WTC11 (cell line): ENCODE measurements at regions of chr7 and their contacts with region 1.

Region 1: DNA sequence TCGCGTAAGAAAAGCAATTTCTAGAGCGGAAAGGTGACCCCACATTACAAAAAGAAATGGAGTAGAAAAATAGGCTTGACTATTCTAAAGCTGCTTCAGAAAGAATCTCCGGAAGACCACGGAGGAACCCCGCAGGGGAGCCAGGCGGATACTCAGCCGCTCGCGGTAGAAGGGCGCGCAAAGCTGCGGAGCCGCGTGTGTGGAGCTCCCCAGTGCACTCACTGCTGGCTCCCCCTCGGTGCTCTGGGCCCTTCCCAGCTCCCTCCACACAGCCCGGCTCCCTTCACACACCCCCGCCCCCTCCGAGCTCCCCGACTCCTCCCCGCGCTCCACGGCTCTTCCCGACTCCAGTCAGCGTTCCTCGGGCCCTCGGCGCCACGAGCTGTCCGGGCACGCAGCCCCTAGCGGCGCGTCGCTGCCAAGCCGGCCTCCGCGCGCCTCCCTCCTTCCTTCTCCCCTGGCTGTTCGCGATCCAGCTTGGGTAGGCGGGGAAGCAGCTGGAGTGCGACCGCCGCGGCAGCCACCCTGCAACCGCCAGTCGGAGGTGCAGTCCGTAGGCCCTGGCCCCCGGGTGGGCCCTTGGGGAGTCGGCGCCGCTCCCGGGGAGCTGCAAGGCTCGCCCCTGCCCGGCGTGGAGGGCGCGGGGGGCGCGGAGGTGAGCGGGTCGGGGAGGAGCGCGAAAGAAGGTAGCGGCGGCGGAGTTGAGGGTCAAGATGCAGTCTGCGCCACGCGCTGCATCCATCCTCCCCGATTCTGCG is at the start of gene STEAP2:
- DNase-seq: peak; percentile 91
- ATAC-seq: peak; percentile 93
- H3K4me3 Mint-ChIP-seq: no peak within 1 kb of the TSS
- H3K27ac Mint-ChIP-seq: peak within 1 kb of the TSS; percentile 57
- H3K4me1 Mint-ChIP-seq: peaks cover 21% of the 10 kb centered on the region
- H3K27me3 Mint-ChIP-seq: no peaks in the 10 kb centered on the region
- CTCF ChIP-seq: peak; percentile 14; the same call in 1 of the 2 replicates
- total RNA-seq, gene STEAP2: 13.4 to 17.3 TPM (median 17.0 TPM) in 3 replicates

Region 2: DNA sequence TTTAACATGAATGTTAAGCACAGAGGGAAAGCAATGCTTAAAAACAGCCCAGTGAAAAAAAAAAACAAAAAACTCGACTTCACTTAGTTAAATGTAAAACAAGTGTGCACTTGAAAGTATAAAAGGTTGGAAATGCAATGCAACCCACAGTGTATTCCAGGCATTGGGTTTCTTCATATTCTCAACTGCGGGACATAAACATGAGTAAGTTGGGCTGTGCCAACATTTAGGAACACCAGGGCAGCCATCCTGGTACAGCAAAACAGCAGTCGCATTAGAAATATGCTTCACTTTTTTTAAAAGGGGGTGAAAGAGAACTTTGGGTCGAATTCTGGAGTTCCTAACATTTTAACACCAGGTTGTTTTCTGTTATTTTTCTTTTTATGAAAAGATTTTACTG is 56.4 kb before region 1 on chr7:
- CTCF ChIA-PET with region 1: interaction called, 15 read pairs
- POLR2A ChIA-PET with region 1: interaction called, 3 read pairs
- DNase-seq: no peak
- ATAC-seq: no peak
- H3K4me3 Mint-ChIP-seq: peak overlapping the region; percentile 72
- H3K27ac Mint-ChIP-seq: no peak overlapping the region
- H3K4me1 Mint-ChIP-seq: peaks cover 20% of the 10 kb centered on the region
- H3K27me3 Mint-ChIP-seq: peaks cover 22% of the 10 kb centered on the region
- CTCF ChIP-seq: no peak

Region 3: GRCh38 chr7:90222811-90223725 is 11.5 kb after region 1 on chr7:
- CTCF ChIA-PET with region 1: interaction called, 29 read pairs
- POLR2A ChIA-PET with region 1: interaction called, 13 read pairs
- DNase-seq: no peak
- ATAC-seq: peak; percentile 6; the same call in 1 of the 2 replicates
- H3K4me3 Mint-ChIP-seq: no peak overlapping the region
- H3K27ac Mint-ChIP-seq: peak overlapping the region; percentile 70; the same call in 1 of the 2 replicates
- H3K4me1 Mint-ChIP-seq: peaks cover 37% of the 10 kb centered on the region
- H3K27me3 Mint-ChIP-seq: no peaks in the 10 kb centered on the region
- CTCF ChIP-seq: no peak

Region 4: DNA sequence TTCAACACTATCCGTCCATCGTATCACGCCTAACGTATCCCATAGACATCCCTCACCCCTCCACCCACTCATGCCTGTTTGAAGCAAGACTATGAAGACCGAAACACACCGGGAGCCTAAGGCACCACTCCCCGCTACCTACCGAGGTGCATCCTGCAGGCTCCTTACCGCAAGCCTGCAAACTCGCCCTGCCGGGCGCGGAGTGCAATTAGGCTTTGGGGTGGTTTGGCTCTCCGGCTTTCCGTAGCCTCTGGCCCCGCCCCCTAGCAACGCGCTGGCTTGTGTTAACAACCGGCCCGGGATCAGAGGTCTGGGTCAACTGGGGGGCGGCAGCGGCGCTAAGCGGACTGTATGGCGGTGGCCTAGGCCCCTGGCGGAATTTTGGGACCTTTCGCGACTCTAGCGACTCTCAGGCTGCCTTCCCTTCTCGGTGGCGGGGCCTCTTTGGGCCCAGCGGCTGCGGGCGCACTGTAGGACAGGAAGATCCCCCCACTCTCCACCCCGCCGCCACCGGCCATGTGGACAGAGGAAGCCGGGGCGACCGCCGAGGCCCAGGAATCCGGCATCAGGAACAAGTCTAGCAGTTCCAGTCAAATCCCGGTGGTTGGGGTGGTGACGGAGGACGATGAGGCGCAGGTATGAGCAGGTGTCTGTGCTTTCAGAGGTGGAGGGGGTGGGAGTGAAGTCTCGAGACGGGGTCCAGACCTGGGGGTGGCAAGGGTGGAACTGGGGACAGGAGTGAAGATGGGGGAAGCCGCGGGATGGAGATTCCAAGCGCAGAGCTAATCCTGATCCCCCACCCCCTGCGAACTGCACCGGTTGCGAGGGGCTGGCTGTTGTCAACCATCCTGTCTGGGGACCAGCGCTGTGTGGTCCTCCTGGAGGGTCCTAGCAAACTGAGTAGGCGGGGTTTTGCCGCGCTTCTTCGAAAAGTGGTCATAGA is 33.6 kb after region 1 on chr7 and contains the start of gene CFAP69:
- CTCF ChIA-PET with region 1: interaction called, 11 read pairs
- POLR2A ChIA-PET with region 1: interaction called, 5 read pairs
- DNase-seq: peak; percentile 98
- ATAC-seq: peak; percentile 83
- H3K4me3 Mint-ChIP-seq: peak within 1 kb of the TSS; percentile 95
- H3K27ac Mint-ChIP-seq: no peak within 1 kb of the TSS
- H3K4me1 Mint-ChIP-seq: peaks cover 43% of the 10 kb centered on the region
- H3K27me3 Mint-ChIP-seq: peaks cover 31% of the 10 kb centered on the region
- CTCF ChIP-seq: no peak
- total RNA-seq, gene CFAP69: 2.7 to 3.4 TPM (median 3.3 TPM) in 3 replicates

Region 5: DNA sequence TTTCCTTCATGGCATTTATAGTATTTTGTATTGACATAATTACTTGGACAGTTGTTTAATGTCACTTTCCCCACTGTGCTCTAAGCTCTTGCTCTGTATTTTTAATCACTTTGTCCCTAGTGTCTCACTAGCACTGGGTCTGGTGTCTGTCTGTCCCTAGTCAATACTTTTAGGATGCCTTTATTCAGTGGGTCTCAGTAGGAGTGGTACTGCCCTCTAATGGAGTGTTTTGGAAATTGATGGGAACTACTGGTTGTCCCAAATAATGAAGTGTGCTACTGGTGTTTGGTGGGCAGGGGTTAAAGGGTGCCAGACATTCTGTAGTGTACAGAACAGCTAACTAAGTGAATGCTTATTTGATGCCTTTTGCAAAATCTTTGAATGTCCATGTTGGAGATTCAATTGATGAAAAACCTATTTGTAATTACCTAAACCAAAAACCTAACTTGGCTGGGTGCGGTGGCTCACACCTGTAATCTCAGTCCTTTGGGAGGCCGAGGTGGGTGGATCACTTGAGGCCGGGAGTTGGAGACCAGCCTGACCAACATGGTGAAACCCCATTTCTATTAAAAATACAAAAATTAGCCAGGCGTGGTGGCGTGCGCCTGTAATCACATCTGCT is 417.8 kb after region 1 on chr7:
- CTCF ChIA-PET with region 1: no interaction called
- POLR2A ChIA-PET with region 1: no interaction called
- DNase-seq: no peak
- ATAC-seq: peak; percentile 85
- H3K4me3 Mint-ChIP-seq: no peak overlapping the region
- H3K27ac Mint-ChIP-seq: no peak overlapping the region; the same call in 1 of the 2 replicates
- H3K4me1 Mint-ChIP-seq: peaks cover 43% of the 10 kb centered on the region
- H3K27me3 Mint-ChIP-seq: no peaks in the 10 kb centered on the region
- CTCF ChIP-seq: peak; percentile 43